IMR-90 (cell line): ENCODE measurements at regions of chr18 and their contacts with region 1.

Region 1: GRCh38 chr18:28204154-28204553 is 27.2 kb upstream of the CDH2 start:
- DNase-seq: peak; percentile 85
- ATAC-seq: peak; percentile 82
- H3K4me3 ChIP-seq: no peak overlapping the region
- H3K27ac ChIP-seq: no peak overlapping the region
- H3K4me1 ChIP-seq: peaks cover 3% of the 10 kb centered on the region
- H3K27me3 ChIP-seq: no peaks in the 10 kb centered on the region
- CTCF ChIP-seq: no peak
- POLR2A ChIP-seq: no peak
- RAD21 ChIP-seq: no peak

Region 2: DNA sequence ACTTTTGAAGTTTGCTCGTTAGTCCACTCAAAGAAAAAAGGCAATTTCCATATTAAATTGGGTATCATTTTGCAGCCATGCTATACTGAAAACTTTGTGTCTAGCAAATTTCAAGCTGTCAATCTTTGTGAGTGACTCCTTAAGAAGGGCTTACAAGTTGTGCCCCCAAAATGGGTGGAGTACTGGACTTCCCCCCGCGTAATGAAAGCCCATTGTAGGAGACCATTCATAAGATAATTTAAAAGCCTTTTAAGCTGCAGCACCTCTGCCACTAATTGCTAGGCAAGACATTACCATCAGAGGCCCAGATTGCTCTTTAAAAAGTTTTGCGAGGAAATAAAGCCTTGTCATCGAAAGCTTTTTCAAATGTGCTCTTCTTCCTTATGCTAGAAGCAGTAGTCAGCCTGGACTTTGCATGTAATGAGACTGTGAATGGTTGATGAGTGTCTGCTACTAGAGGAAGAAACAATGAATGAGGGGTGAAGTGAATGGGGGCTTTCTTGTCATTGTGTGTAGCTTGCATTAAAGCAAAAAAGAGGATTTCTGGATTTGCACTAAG is 318.0 kb after region 1 on chr18:
- CTCF ChIA-PET with region 1: no interaction called
- POLR2A ChIA-PET with region 1: interaction called, 10 read pairs
- dilution Hi-C with region 1: no loop called
- in situ Hi-C with region 1: no loop called
- intact Hi-C with region 1: no loop called
- DNase-seq: no peak
- ATAC-seq: no peak
- H3K4me3 ChIP-seq: no peak overlapping the region
- H3K27ac ChIP-seq: no peak overlapping the region
- H3K4me1 ChIP-seq: no peaks in the 10 kb centered on the region
- H3K27me3 ChIP-seq: no peaks in the 10 kb centered on the region
- CTCF ChIP-seq: no peak
- POLR2A ChIP-seq: no peak
- RAD21 ChIP-seq: no peak